Left cardiac atrium (tissue), 4 donors: ENCODE measurements at regions of chr7 and their contacts with region 1.

Region 1: GRCh38 chr7:73606801-73607691 is 17.3 kb downstream of the MLXIPL start:
- DNase-seq: peak; percentile 54
- ATAC-seq: peak; percentile 55 to 66

Region 2: DNA sequence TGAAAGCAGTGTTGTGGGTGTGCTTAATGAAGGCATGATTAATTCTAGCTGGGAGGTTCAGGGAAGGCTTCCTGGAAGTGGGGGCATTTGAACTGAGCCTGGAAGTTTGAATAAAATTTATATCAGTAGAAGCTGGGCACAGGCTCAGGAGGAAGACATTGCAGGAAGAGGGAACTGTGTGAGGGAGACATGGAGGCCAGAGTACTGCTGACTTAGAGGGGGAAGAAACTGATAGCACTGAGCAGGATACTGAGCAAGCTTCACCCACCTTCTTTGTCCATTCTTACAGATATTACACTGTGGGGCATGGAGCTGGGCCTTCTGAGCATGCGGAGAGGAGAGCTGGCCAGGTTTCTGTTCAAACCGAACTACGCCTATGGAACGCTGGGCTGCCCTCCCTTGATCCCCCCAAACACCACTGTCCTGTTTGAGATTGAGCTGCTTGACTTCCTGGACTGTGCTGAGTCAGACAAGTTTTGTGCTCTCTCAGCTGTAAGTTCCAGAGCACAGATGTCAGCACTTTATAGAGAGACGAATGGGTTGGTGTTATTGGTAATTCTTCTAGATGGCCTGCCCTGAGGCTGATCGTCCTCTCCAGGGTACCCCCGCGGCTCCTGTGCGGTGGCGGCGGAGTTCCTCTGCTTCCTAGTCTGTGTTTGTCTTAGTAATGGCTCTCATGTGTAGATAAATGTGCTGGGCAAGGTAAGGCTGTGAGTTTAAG is 277.0 kb before region 1 on chr7:
- intact Hi-C with region 1: no loop called
- DNase-seq: no peak
- ATAC-seq: peak in 1 of 2 donors; percentile 77

Region 3: DNA sequence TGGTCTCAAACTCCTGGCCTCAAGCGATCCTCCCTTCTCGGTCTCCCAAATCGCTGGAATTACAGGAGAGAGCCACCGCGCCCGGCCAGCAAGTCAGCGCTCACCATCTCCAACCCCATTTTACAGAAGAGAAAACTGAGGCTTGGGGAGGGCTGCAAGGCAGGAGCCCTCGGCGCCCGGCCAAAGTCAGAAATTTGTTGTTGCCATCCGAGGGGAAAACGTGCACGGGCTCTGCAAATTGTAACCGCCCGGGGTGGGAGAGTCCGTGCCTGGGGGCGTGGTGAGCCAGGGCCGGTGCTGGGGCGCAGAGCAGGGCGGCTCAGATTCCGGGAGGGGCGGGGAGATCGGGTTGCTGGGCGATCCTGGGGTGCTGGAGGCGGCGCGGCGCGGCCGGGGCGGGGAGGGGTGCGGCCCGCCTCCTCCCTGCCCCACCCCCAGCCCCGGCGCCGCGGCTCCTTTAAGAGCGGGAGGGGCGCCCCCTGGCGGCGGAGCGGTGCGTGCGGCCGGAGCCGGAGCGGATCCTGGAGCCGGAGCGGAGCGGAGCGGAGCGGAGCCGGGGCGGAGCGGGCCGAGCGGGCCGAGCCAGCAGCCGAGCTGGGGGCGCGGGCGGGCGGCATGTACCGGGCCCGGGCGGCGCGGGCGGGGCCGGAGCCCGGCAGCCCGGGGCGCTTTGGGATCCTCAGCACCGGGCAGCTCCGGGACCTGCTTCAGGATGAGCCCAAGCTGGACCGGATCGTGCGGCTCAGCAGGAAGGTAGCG is 60.5 kb after region 1 on chr7 and contains the start of gene VPS37D:
- intact Hi-C with region 1: loop called in 1 of 2 experiments (anchors 5 kb)
- DNase-seq: peak; percentile 92
- ATAC-seq: peak; percentile 96
- total RNA-seq, gene VPS37D: 1.4 to 2.5 TPM

Region 4: DNA sequence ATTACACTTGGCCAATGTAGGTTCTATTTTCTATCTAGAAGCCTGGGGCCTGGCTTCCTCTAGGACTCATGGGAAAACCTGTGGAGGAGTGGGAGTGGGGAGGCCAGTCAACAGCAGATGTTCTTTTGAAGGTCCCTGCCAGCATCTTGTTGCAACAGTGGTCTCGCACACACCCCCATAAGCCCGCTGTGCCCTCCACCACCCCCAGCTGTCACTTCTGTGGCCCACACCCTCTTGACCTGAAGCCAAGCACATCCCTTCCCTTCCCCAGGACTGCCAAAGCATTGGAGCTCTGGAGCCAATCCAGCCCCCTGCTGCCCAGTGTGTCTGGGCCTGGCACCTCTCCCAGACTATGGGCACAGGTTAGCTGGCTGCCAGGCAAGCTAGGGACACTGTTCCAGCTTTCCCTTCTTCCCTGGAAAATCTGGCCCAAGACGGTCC is 114.4 kb after region 1 on chr7:
- intact Hi-C with region 1: loop called (anchors 2 to 5 kb)
- DNase-seq: peak; percentile 72
- ATAC-seq: peak; percentile 55 to 76

Region 5: GRCh38 chr7:73811760-73812168 is 204.7 kb after region 1 on chr7:
- intact Hi-C with region 1: no loop called
- DNase-seq: peak; percentile 50
- ATAC-seq: peak; percentile 84 to 90

Region 6: DNA sequence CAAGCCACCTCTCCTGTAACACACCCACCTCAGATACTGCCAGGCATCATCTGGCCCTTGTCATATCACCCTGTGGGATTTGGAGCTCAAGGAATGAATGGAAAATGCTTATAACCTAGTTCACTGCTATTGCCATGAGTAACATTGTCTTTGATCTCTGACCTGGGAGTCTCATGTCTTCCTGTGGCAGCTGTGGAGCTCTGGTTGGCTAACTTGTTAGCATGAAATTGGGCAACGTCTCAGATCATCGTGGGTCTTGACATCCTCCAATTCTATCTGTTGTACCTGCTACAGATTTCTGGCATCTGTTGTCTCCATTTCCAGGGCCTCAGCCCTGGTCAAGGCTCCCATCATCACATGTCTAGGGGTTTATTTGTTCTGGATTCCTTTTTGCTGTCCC is 251.8 kb after region 1 on chr7:
- intact Hi-C with region 1: loop called (anchors 5 to 10 kb)
- DNase-seq: peak; percentile 4
- ATAC-seq: no peak